ENCODE measurements at regions of chr7 and their contacts with region 1.

Region 1: GRCh38 chr7:129433847-129434674 is at the start of gene STRIP2:
- DNase-seq: peak; percentile 96
- H3K4me3 Mint-ChIP-seq: peak within 1 kb of the TSS; percentile 85
- H3K27ac Mint-ChIP-seq: peak within 1 kb of the TSS; percentile 81
- H3K4me1 Mint-ChIP-seq: peaks cover 37% of the 10 kb centered on the region
- H3K27me3 Mint-ChIP-seq: peaks cover 6% of the 10 kb centered on the region

Region 2: DNA sequence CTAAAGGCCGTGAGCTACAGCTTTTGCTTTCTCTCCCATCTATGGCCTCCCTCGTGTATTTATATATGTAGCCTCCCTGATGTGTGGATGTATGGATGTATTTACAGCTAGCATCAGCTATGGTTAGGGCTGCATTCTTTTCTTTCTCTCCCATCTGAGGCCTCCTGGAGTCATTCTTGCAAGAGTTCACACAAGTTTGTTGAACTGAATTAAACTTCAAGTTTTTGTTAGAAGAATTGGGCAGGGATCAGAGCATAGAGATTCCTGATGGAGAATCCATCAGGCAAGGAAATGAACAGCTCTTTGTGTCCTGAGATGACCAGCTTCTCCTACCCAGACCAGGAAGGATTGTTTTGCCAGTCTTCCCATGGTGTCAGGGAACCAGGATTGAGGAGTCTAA is 148.9 kb before region 1 on chr7:
- CTCF ChIA-PET with region 1: no interaction called
- DNase-seq: no peak
- H3K4me3 Mint-ChIP-seq: no peak overlapping the region
- H3K27ac Mint-ChIP-seq: no peak overlapping the region
- H3K4me1 Mint-ChIP-seq: no peaks in the 10 kb centered on the region
- H3K27me3 Mint-ChIP-seq: no peaks in the 10 kb centered on the region

Region 3: GRCh38 chr7:129401967-129402860 is 31.8 kb before region 1 on chr7:
- CTCF ChIA-PET with region 1: interaction called, 10 read pairs
- DNase-seq: peak; percentile 29
- H3K4me3 Mint-ChIP-seq: no peak overlapping the region
- H3K27ac Mint-ChIP-seq: no peak overlapping the region
- H3K4me1 Mint-ChIP-seq: peaks cover 12% of the 10 kb centered on the region
- H3K27me3 Mint-ChIP-seq: no peaks in the 10 kb centered on the region

Region 4: GRCh38 chr7:129561677-129562359 is 127.8 kb after region 1 on chr7:
- CTCF ChIA-PET with region 1: no interaction called
- DNase-seq: no peak
- H3K4me3 Mint-ChIP-seq: no peak overlapping the region
- H3K27ac Mint-ChIP-seq: no peak overlapping the region
- H3K4me1 Mint-ChIP-seq: peaks cover 3% of the 10 kb centered on the region
- H3K27me3 Mint-ChIP-seq: peaks cover 35% of the 10 kb centered on the region